ENCODE measurements at regions of chr18 and their contacts with region 1.

Region 1: DNA sequence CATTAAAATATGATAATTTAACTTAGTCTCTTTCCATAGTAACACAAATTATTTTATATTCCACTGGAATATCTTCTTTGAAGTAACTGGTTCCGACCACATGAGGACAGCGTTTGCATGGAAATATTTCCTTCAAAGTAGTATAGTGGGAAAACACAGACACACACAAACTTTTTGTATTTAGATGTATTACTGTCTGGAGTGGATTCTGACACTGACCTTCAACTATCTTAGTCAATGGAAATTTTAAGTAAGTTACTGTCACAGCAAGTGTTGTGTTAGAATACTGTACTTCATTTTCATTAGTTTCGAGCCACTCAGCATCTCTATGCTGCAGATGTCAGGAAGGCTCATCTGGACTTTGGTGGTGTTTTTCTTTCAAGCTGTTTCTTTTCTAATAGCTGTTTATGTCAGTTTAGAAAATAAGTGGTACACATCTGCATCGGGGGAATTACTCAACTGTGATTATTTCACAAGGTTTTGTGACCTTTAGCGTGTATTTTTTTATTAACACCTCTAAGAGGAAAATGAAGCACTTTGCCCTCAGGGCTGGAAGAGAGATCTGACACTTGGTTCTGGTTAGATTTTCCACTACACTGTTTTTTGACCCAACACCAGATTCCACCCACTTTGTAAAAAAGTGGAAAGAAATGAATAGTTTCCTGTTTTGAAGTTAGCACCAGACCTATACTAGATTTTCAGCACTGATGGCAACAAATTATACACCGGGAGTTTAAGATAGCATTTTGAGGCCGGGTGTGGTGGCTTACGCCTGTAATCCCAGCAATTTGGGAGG is 18.9 kb upstream of the THOC1 start:
- DNase-seq: no peak
- ATAC-seq: peak; percentile 67
- H3K4me3 ChIP-seq: no peak overlapping the region
- H3K27ac ChIP-seq: no peak overlapping the region
- H3K4me1 ChIP-seq: no peaks in the 10 kb centered on the region
- H3K27me3 ChIP-seq: peaks cover 21 to 24% of the 10 kb centered on the region in 2 experiments
- CTCF ChIP-seq: peak in 2 of 3 experiments; percentile 41 to 73; a peak in 4 of 6 replicates
- EP300 ChIP-seq: no peak
- POLR2A ChIP-seq: no peak
- RAD21 ChIP-seq: peak; percentile 81 to 93

Region 2: DNA sequence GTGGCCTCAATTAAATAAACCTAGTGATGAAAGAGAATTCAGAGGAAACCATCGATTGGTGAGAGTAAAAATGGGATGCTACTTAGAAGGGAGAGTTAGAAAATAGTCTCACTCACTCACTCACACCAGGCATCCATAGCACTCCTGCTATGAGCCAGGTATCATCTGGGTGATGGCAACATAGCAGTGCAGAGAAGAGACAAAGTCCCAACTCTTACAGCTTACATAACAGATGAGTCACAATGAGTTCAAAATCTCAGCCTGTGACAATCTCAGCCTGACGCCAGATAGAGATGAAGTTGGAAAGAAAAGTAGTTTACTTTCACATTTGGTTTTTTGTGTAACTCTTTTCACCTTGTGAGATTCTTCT is 36.5 kb after region 1 on chr18:
- CTCF ChIA-PET with region 1: no interaction called
- POLR2A ChIA-PET with region 1: no interaction called
- in situ Hi-C with region 1: no loop called
- intact Hi-C with region 1: loop called (anchors 2 kb)
- DNase-seq: no peak
- ATAC-seq: no peak
- H3K4me3 ChIP-seq: no peak overlapping the region
- H3K27ac ChIP-seq: no peak overlapping the region
- H3K4me1 ChIP-seq: peaks cover 0 to 7% of the 10 kb centered on the region in 2 experiments; a peak in 2 of 5 replicates
- H3K27me3 ChIP-seq: peaks cover 14 to 36% of the 10 kb centered on the region in 2 experiments
- CTCF ChIP-seq: no peak
- EP300 ChIP-seq: no peak
- POLR2A ChIP-seq: no peak
- RAD21 ChIP-seq: no peak

Region 3: GRCh38 chr18:477565-477964 is 190.9 kb after region 1 on chr18:
- CTCF ChIA-PET with region 1: no interaction called
- POLR2A ChIA-PET with region 1: no interaction called
- in situ Hi-C with region 1: no loop called
- intact Hi-C with region 1: loop called (anchors 5 kb)
- DNase-seq: peak; percentile 45 to 53 (median 50)
- ATAC-seq: peak; percentile 86
- H3K4me3 ChIP-seq: no peak overlapping the region
- H3K27ac ChIP-seq: no peak overlapping the region
- H3K4me1 ChIP-seq: no peaks in the 10 kb centered on the region
- H3K27me3 ChIP-seq: peaks cover 38 to 54% of the 10 kb centered on the region in 2 experiments
- CTCF ChIP-seq: peak; percentile 66 to 72 (median 70)
- EP300 ChIP-seq: no peak
- POLR2A ChIP-seq: no peak
- RAD21 ChIP-seq: peak; percentile 51 to 78

Region 4: DNA sequence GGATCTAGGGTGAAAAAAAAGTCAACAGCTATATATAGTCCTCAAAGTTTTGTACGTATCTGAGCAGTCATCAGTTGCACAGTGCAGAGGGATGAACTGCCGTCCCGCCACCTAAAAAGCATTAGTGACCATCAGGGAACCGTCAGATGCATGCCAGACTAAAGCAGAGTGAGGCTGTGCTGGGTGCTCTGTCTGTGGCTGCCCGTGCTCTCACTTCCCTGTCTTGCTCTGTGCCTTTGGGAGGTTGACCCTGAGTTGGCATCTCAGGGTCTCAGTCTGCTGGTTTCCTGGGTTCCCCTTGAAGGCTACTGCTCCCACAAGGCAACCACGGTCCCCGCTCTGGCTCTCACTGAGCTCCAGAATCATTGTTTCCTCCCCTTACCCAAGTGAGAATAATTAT is 321.2 kb after region 1 on chr18:
- CTCF ChIA-PET with region 1: no interaction called
- POLR2A ChIA-PET with region 1: no interaction called
- in situ Hi-C with region 1: loop called (anchors 5 kb)
- intact Hi-C with region 1: no loop called
- DNase-seq: no peak
- ATAC-seq: 0 out of 3 replicates have a peak, but pooled peaks have one; percentile 20
- H3K4me3 ChIP-seq: no peak overlapping the region
- H3K27ac ChIP-seq: no peak overlapping the region
- H3K4me1 ChIP-seq: peaks cover 2% of the 10 kb centered on the region in 2 experiments; a peak in 2 of 5 replicates
- H3K27me3 ChIP-seq: peaks cover 7 to 30% of the 10 kb centered on the region in 2 experiments; a peak in 4 of 5 replicates
- CTCF ChIP-seq: no peak
- EP300 ChIP-seq: no peak
- POLR2A ChIP-seq: no peak
- RAD21 ChIP-seq: no peak

Region 5: DNA sequence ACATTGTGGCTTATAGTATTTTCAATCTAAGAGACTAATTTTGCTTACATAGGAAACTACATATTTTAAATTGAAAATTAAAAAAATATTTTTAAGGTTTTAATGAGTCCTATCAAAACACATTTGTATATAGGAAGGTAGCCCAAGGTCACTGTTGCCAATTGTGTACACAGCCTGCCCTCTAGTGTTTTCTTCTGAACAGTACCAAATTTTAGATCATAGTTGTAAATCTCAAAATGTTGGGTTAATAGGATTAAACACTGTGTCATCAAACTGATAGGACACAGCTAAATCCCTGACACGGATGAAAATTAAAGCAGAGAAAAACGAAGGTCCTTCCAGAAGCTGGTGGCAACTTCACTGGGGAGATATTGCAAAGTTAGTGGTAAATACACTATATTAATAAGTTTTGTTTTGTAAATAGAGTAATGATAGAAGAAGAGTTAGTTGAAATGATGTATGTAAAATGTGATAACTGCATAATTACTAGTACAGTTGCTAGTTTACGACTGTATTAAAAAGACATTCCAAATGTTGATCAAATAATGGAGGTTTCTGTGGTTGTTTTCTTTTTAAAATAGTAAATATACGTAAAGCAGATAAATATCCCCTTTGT is 329.8 kb after region 1 on chr18:
- CTCF ChIA-PET with region 1: interaction called, 12 read pairs
- POLR2A ChIA-PET with region 1: no interaction called
- in situ Hi-C with region 1: no loop called
- intact Hi-C with region 1: loop called (anchors 2 kb)
- DNase-seq: peak; percentile 56 to 69 (median 57)
- ATAC-seq: peak; percentile 66
- H3K4me3 ChIP-seq: no peak overlapping the region
- H3K27ac ChIP-seq: no peak overlapping the region
- H3K4me1 ChIP-seq: peaks cover 0 to 6% of the 10 kb centered on the region in 2 experiments; a peak in 3 of 5 replicates
- H3K27me3 ChIP-seq: peaks cover 2 to 4% of the 10 kb centered on the region in 2 experiments; a peak in 2 of 5 replicates
- CTCF ChIP-seq: peak; percentile 68 to 93 (median 77); a peak in 5 of 6 replicates
- EP300 ChIP-seq: no peak
- POLR2A ChIP-seq: no peak
- RAD21 ChIP-seq: peak; percentile 99

Measured in K562 (cell line).